ENCODE measurements at regions of chr4 and their contacts with region 1.

Region 1: DNA sequence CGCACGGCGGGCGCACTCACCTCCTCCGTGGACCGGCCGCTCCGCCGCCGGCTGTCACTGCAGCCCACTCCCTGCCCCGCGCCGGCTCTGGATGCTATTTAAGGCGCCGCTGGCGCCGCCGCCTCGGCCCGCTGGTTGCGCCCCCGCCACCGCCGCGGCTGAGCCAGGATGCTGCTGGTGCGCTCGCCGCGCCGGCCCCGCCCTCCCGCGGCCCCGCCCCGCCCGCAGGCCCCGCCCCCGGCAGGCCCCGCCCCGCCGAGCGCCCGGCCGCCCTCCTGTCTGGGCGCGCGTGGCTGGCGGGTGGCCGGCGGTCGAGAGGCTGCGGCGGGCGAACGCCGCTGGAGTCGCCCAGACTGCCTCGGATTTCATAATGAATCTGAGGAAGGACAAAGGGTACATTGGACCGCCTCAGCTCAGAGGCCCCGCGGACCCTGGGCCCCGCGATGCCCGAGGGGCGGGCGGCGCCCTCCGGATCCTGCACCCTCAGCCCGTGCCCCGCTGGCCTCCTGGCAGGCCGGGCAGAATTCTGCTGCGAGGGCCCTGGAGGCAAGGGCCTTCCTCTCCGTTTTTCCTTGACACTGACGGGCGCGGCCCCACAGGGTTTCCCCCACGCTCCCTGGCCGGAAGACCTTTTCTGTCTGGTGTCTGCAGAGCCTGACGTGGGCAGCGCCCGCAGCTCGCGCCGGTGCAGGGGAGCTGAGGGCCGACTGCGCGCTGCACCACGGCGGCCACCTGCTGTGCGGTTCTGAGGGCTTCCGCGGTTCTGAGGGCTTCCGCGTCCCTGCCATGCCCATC is at the start of gene ACSL1:
- DNase-seq: peak; percentile 77
- ATAC-seq: peak; percentile 78
- H3K4me3 Mint-ChIP-seq: peak within 1 kb of the TSS; percentile 94
- H3K27ac Mint-ChIP-seq: peak within 1 kb of the TSS; percentile 91
- H3K4me1 Mint-ChIP-seq: peaks cover 42% of the 10 kb centered on the region
- H3K27me3 Mint-ChIP-seq: no peaks in the 10 kb centered on the region
- CTCF ChIP-seq: no peak
- total RNA-seq, gene ACSL1: 46.3 and 47.0 TPM in 2 replicates

Region 2: DNA sequence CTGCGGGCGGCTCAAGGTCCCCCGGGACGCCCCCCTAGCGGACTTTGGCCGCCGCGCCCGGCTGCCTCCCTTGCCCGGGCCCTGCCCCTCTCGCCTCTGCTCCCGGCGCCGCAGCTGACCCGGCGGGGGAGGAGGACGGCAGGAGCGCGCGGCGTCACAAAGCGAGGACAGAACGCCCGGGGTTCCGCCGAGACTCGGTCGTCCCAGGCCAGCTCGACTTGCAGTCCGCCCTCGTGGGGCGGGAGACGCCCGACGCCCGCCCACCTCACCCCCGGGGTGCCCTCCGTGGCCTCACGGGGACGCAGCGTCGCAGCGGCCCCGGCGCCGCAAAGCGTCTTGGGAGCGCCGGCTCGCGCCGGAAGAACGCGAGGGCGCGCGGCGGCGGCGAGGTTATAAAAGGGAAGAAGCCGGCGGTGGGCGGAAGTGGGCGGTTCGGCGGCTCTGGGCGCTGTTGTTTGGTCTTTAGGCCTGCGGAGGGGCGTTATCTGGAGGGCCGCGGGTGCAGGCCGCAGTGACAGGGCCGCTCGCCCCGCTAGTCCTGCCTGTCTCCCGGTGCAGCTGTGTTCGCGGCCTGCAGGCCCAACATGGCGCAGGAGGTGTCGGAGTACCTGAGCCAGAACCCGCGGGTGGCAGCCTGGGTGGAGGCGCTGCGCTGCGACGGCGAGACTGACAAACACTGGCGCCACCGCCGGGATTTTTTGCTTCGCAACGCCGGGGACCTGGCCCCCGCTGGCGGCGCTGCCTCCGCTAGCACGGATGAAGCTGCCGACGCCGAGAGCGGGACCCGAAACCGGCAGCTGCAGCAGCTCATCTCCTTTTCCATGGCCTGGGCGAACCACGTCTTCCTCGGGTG is 1381.7 kb before region 1 on chr4 and contains the start of gene CDKN2AIP:
- CTCF ChIA-PET with region 1: no interaction called
- POLR2A ChIA-PET with region 1: no interaction called
- intact Hi-C with region 1: loop called (anchors 10 kb)
- DNase-seq: peak; percentile 93
- ATAC-seq: peak; percentile 86
- H3K4me3 Mint-ChIP-seq: peak within 1 kb of the TSS; percentile 95
- H3K27ac Mint-ChIP-seq: peak within 1 kb of the TSS; percentile 95
- H3K4me1 Mint-ChIP-seq: peaks cover 36% of the 10 kb centered on the region
- H3K27me3 Mint-ChIP-seq: no peaks in the 10 kb centered on the region
- CTCF ChIP-seq: no peak
- total RNA-seq, gene CDKN2AIP: 19.9 and 21.8 TPM in 2 replicates

Region 3: DNA sequence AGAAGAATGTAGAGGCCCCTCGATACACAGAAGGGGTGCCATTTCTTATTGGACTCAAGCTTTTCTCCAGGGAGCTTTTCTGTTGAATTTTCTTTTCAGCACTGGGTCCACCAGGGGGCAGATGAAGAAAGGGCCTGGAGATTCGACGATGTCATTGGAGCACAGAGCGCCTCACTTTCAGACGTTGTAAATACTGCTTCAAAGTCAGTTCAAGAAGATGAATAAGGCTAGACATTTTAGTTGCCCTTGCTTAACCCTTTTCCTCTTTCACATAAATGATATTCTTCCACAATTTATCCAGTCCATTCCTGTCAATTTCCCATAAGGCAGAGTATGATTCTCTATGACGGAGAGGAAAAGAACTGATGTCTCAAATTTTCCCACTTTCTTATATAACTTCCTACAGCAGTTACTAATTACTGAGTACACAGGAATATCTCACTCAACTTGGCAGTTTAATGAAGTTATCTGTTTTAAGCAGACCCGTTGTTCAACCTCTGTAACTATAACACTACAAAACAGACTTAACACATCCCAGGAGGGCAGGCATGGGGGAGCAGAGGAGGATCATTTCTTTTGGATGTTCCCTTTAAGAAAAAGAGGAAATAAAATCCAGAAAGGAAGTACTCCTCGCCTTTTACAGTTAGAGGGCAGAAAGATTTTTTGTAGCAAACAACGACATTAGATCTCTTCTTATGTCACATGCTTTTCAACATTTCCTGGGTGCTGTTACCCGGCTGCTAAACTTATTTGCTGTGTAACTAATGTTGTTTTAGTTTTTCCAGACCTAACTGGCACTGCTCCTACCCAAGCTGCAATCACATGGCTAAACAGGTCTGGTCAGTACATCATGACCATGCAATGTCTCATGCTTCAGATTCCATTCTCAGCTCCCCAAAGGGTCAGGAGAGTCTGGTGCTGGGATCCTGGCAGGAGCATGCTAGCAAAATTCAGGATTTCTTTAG is 80.0 kb before region 1 on chr4:
- CTCF ChIA-PET with region 1: interaction called, 4 read pairs
- POLR2A ChIA-PET with region 1: no interaction called
- intact Hi-C with region 1: loop called (anchors 2 kb)
- DNase-seq: peak; percentile 35
- ATAC-seq: peak; percentile 88
- H3K4me3 Mint-ChIP-seq: peak overlapping the region; percentile 5
- H3K27ac Mint-ChIP-seq: no peak overlapping the region
- H3K4me1 Mint-ChIP-seq: peaks cover 10% of the 10 kb centered on the region
- H3K27me3 Mint-ChIP-seq: no peaks in the 10 kb centered on the region
- CTCF ChIP-seq: no peak

Region 4: GRCh38 chr4:184815046-184815877 is 10.8 kb before region 1 on chr4:
- CTCF ChIA-PET with region 1: no interaction called
- POLR2A ChIA-PET with region 1: interaction called, 31 read pairs
- intact Hi-C with region 1: loop called (anchors 1 kb)
- DNase-seq: peak; percentile 33
- ATAC-seq: peak; percentile 68
- H3K4me3 Mint-ChIP-seq: peak overlapping the region; percentile 60
- H3K27ac Mint-ChIP-seq: peak overlapping the region; percentile 87
- H3K4me1 Mint-ChIP-seq: peaks cover 81% of the 10 kb centered on the region
- H3K27me3 Mint-ChIP-seq: no peaks in the 10 kb centered on the region
- CTCF ChIP-seq: no peak

Region 5: GRCh38 chr4:184968784-184969201 is 142.7 kb after region 1 on chr4:
- CTCF ChIA-PET with region 1: no interaction called
- POLR2A ChIA-PET with region 1: no interaction called
- intact Hi-C with region 1: loop called (anchors 2 kb)
- DNase-seq: no peak
- ATAC-seq: no peak
- H3K4me3 Mint-ChIP-seq: no peak overlapping the region
- H3K27ac Mint-ChIP-seq: no peak overlapping the region
- H3K4me1 Mint-ChIP-seq: peaks cover 7% of the 10 kb centered on the region
- H3K27me3 Mint-ChIP-seq: peaks cover 5% of the 10 kb centered on the region
- CTCF ChIP-seq: no peak

Region 6: GRCh38 chr4:185471235-185472102 is 645.4 kb after region 1 on chr4 and contains the start of gene CCDC110:
- CTCF ChIA-PET with region 1: no interaction called
- POLR2A ChIA-PET with region 1: no interaction called
- intact Hi-C with region 1: loop called (anchors 5 kb)
- DNase-seq: peak; percentile 87
- ATAC-seq: peak; percentile 95
- H3K4me3 Mint-ChIP-seq: peak within 1 kb of the TSS; percentile 88
- H3K27ac Mint-ChIP-seq: peak within 1 kb of the TSS; percentile 80
- H3K4me1 Mint-ChIP-seq: peaks cover 18% of the 10 kb centered on the region
- H3K27me3 Mint-ChIP-seq: no peaks in the 10 kb centered on the region
- CTCF ChIP-seq: no peak
- total RNA-seq, gene CCDC110: 0.33 and 0.71 TPM in 2 replicates